Posterior cingulate gyrus (tissue), 11 donors: ENCODE measurements at regions of chr17 and their contacts with region 1.

Region 1: GRCh38 chr17:76623271-76624146 is 20.0 kb downstream of the ST6GALNAC1 start:
- DNase-seq: peak; percentile 59 to 96 (median 80)

Region 2: GRCh38 chr17:76523084-76524037 is 100.1 kb before region 1 on chr17:
- intact Hi-C with region 1: loop called (anchors 1 kb)
- DNase-seq: peak in 9 of 10 donors; percentile 68 to 96 (median 80)

Region 3: GRCh38 chr17:76557368-76558197 is 65.9 kb before region 1 on chr17:
- intact Hi-C with region 1: loop called (anchors 5 kb)
- DNase-seq: peak; percentile 85 to 99 (median 92)

Region 4: GRCh38 chr17:76683011-76683755 is 59.7 kb after region 1 on chr17:
- intact Hi-C with region 1: no loop called
- DNase-seq: peak in 2 of 10 donors; percentile 4 to 45